Activated CD4-positive, alpha-beta memory T cell treated with anti-CD3 and anti-CD28 coated beads for 36 hours (primary cell): ENCODE measurements at regions of chr2 and their contacts with region 1.

Region 1: DNA sequence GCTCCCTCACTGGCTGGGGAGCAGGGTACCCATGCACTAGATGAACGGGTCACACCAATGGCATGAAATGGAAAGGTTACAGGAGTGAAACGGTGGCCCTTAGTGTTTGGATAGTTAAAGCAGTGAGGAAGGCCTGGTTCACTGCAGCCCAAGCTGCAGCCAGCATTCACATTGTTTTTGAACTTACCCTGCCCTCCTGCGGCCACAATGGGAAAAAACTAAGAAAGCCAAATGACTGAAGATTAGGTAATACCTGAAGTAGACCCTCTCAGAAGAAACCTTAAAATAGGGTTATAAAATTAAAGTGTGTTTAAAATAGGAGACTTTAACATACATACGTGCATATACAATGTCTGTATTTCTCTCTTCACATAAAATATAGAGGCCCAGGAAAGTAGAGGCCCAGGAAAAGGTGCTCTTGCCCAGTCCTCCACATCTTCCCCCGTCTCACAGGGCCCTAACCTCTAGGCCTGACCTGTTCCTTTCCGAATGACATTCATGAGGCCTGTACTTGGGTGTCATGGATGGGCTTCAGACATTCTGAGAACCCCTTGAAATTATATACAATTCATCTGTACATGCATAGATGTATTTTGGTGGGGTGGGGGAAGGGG is 33.3 kb downstream of the DOK1 start:
- DNase-seq: peak; percentile 75
- H3K4me3 Mint-ChIP-seq: no peak overlapping the region
- H3K27ac Mint-ChIP-seq: no peak overlapping the region
- H3K4me1 Mint-ChIP-seq: peaks cover 27% of the 10 kb centered on the region
- H3K27me3 Mint-ChIP-seq: peaks cover under 1% of the 10 kb centered on the region

Region 2: GRCh38 chr2:74507145-74507925 is 80.4 kb before region 1 on chr2 and contains the start of gene PCGF1:
- CTCF ChIA-PET with region 1: interaction called, 15 read pairs
- POLR2A ChIA-PET with region 1: no interaction called
- intact Hi-C with region 1: no loop called
- DNase-seq: peak; percentile 99
- H3K4me3 Mint-ChIP-seq: peak within 1 kb of the TSS; percentile 91
- H3K27ac Mint-ChIP-seq: peak within 1 kb of the TSS; percentile 98
- H3K4me1 Mint-ChIP-seq: peaks cover 48% of the 10 kb centered on the region
- H3K27me3 Mint-ChIP-seq: peaks cover 33% of the 10 kb centered on the region
- total RNA-seq, gene PCGF1: 22.6 to 26.0 TPM

Region 3: DNA sequence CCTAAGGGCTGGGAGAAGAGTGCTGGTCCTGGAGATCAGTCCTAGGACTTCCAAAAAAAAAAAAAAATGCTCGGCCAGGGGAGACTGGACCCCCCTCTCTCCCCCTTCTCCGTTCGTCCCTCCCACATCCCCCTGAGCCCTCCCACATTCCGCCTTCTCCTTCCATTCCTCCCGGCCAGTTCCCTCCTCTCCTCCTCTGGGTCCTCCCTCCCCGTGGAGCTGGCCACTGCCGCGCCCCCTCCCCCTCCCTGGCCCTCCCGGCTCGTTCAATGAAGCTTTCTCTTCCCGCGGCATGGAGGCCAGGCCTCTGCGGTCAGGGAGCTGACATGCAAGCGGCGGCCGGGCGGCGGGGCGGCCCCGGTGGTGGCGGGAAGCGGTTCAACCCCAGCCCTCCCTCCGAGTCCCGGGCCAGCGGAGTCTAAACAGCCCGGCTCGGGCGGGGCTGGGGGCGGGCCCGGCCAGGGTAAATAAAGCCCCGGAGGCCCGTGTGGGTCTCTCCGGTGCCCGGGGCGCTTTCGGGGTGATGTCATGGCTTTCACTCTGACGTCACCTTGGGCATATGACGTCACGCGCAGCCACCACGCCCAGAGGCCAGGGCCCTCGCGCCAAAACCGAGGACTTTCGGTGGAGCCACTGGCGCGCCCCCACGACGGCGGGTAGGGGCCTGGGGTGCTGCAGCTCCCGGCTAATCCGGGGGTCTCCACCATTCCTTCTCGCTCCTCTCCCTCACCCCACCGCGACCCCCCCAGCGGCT is 33.7 kb before region 1 on chr2 and contains the start of gene LOXL3:
- CTCF ChIA-PET with region 1: interaction called, 16 read pairs
- POLR2A ChIA-PET with region 1: no interaction called
- intact Hi-C with region 1: loop called (anchors 1 kb)
- DNase-seq: peak; percentile 87
- H3K4me3 Mint-ChIP-seq: peak within 1 kb of the TSS; percentile 95
- H3K27ac Mint-ChIP-seq: peak within 1 kb of the TSS; percentile 91
- H3K4me1 Mint-ChIP-seq: peaks cover 8% of the 10 kb centered on the region
- H3K27me3 Mint-ChIP-seq: peaks cover 10% of the 10 kb centered on the region
- total RNA-seq, gene LOXL3: 0.90 to 1.1 TPM

Region 4: DNA sequence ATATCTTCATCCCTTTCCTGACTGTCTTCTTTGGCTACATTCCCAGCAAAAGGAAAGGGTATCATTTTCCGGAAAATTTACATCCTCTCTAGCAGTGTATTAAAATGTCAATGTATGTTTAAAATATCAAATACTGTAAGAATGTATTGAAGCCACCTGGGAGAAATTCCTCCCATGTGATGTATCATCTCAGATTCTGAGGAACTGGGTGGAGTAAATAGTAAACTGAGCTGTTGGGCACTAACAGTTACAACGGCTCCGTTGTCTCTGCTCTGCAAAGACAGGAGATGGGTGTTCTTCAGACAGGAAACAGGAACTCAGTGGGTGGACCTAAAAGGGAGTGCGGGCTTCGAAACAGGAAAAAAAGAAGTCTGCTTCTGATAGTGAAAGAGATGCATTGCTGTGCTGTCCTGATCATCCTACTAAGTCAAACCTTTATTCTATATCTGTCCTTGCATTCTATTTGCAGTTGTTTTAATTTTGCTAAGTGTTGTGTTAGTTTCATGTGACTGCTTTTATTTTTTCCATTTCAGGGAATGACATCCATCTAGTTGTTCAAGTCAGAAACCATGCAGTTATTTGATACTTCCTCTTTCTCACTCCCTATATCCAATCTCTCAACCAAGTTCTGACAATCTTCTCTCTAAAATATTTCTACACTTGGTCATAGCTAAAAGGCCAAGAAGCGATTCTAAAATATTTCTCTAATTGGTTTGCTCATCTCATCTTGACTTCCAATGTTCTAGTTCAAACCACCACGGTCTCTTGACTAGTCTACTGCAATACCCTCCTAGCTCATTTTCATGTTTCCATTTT is 13.8 kb before region 1 on chr2:
- CTCF ChIA-PET with region 1: interaction called, 48 read pairs
- POLR2A ChIA-PET with region 1: no interaction called
- intact Hi-C with region 1: loop called (anchors 1 kb)
- DNase-seq: no peak
- H3K4me3 Mint-ChIP-seq: peak overlapping the region; percentile 22
- H3K27ac Mint-ChIP-seq: no peak overlapping the region
- H3K4me1 Mint-ChIP-seq: peaks cover 24% of the 10 kb centered on the region
- H3K27me3 Mint-ChIP-seq: no peaks in the 10 kb centered on the region